ENCODE measurements at regions of chr10 and their contacts with region 1.

Region 1: GRCh38 chr10:17206210-17206709 is 4.8 kb upstream of the TRDMT1 start:
- DNase-seq: peak; percentile 60
- ATAC-seq: peak; percentile 92
- H3K4me3 Mint-ChIP-seq: peak overlapping the region; percentile 53
- H3K27ac Mint-ChIP-seq: peak overlapping the region; percentile 95
- H3K4me1 Mint-ChIP-seq: peaks cover 52% of the 10 kb centered on the region
- H3K27me3 Mint-ChIP-seq: no peaks in the 10 kb centered on the region

Region 2: GRCh38 chr10:17216217-17216900 is 10.1 kb after region 1 on chr10:
- CTCF ChIA-PET with region 1: interaction called, 18 read pairs
- POLR2A ChIA-PET with region 1: interaction called, 3 read pairs
- intact Hi-C with region 1: loop called (anchors 1 kb)
- DNase-seq: peak; percentile 48
- ATAC-seq: peak; percentile 96
- H3K4me3 Mint-ChIP-seq: no peak overlapping the region
- H3K27ac Mint-ChIP-seq: peak overlapping the region; percentile 85
- H3K4me1 Mint-ChIP-seq: peaks cover 39% of the 10 kb centered on the region
- H3K27me3 Mint-ChIP-seq: no peaks in the 10 kb centered on the region

Region 3: GRCh38 chr10:17368708-17369272 is 162.5 kb after region 1 on chr10:
- CTCF ChIA-PET with region 1: no interaction called
- POLR2A ChIA-PET with region 1: no interaction called
- intact Hi-C with region 1: no loop called
- DNase-seq: peak; percentile 8
- ATAC-seq: peak; percentile 93
- H3K4me3 Mint-ChIP-seq: no peak overlapping the region
- H3K27ac Mint-ChIP-seq: no peak overlapping the region
- H3K4me1 Mint-ChIP-seq: peaks cover 3% of the 10 kb centered on the region
- H3K27me3 Mint-ChIP-seq: peaks cover 4% of the 10 kb centered on the region

Measured in activated CD4-positive, alpha-beta T cell treated with anti-CD3 and anti-CD28 coated beads for 36 hours (primary cell).